ENCODE measurements at regions of chr3 and their contacts with region 1.

Region 1: DNA sequence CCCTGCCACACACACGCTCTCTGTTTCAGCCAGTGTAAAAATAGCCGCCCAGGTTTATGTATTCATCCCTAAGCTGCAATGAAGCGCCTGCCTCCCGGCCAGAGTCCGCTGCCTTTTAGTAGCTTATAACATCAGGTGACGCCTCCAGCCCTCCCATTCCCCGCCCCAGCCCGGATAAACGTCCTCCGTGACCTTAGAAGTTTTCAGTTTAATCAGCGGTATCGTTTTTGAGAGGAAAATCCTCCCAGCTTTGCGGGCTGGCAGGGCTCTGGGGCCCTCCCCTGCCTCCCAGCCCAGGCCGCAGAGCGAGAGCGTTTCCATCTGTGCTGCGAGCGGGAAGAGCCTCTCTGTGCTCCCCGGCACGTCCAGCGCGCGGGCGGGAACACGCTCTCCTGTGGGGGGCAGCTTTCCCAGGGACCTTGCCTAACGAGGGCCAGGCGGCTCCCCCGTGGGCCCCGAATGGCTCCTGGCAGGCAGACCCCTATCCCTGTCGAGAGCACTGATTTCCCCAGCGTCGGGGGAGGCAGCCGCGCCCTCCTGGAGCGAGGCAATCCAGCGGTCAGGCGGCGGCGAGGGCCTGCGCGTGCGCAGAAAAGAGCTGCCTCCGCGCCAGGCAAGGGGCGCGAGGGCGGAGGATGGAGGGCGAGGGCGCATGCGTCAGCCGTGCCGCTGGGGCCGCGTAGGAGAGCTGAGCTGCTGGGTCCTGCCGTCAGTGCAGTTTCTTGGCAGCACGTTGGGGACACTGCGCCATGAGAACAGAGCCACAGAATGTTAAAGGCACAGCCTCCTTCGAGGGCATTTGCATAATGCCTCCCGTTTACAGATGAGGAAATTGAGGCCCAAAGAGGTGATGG is 71.1 kb downstream of the CCNL1 start:
- DNase-seq: peak; percentile 95 to 97
- H3K4me3 ChIP-seq: peak overlapping the region; percentile 58
- H3K4me3 Mint-ChIP-seq: peak overlapping the region; percentile 81
- H3K27ac Mint-ChIP-seq: peak overlapping the region; percentile 89
- H3K4me1 ChIP-seq: peaks cover 26% of the 10 kb centered on the region
- H3K4me1 Mint-ChIP-seq: peaks cover 26% of the 10 kb centered on the region
- H3K27me3 ChIP-seq: no peaks in the 10 kb centered on the region
- H3K27me3 Mint-ChIP-seq: no peaks in the 10 kb centered on the region
- CTCF ChIP-seq: no peak

Region 2: DNA sequence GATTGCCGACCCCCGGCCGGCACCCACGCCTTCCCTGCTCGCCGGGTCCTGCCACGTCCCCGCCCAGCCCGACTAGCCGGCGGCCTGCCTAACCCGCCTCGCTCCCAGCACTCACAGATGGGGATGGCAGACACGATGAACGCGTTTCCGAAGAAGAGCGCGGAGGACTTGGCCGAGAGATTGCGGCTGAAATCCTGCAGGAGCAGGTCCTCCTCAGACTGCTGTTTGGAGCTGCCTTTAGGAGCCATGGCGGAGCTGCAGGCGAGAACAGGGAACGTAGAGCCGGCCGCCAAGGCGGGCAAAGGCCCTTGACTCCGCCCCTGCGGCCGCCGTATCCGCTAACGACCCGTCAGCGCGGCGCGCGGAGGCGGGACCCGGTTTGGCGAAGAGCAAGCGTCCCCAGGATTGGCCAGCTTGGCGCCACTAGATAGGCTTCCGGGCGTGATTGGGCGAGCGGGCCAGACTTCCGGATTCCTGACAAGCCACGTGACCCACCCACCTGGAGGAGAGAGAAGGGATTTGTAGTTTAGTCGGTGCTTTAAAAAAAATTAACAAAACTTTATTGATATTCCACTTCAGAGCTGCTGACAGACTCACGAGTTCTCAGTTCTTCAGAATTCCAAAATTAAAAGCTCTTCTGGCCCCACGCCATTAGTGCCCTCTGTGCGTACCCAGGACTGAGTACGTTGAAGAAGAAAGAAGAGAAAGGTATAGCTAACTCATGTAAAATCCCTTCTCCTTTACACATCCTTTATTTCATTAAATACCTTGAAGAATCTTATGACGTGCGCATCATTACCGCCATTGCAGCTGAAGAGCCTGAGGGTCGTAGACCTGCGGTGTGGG is 533.8 kb before region 1 on chr3 and contains the start of gene SSR3:
- CTCF ChIA-PET with region 1: interaction called, 3 read pairs
- POLR2A ChIA-PET with region 1: interaction called, 10 read pairs
- intact Hi-C with region 1: loop called (anchors 5 kb)
- DNase-seq: peak; percentile 99
- H3K4me3 ChIP-seq: peak within 1 kb of the TSS; percentile 99
- H3K4me3 Mint-ChIP-seq: peak within 1 kb of the TSS; percentile 88
- H3K27ac Mint-ChIP-seq: peak within 1 kb of the TSS; percentile 81
- H3K4me1 ChIP-seq: peaks cover 19% of the 10 kb centered on the region; the same call in 1 of the 2 replicates
- H3K4me1 Mint-ChIP-seq: peaks cover 22% of the 10 kb centered on the region
- H3K27me3 ChIP-seq: no peaks in the 10 kb centered on the region
- H3K27me3 Mint-ChIP-seq: no peaks in the 10 kb centered on the region
- CTCF ChIP-seq: no peak
- total RNA-seq, gene SSR3: 177 and 186 TPM in 2 replicates

Region 3: GRCh38 chr3:156826144-156826895 is 262.5 kb before region 1 on chr3 and contains the start of gene LEKR1:
- CTCF ChIA-PET with region 1: no interaction called
- POLR2A ChIA-PET with region 1: interaction called, 7 read pairs
- intact Hi-C with region 1: loop called (anchors 2 kb)
- DNase-seq: peak; percentile 93 to 94
- H3K4me3 ChIP-seq: peak within 1 kb of the TSS; percentile 52
- H3K4me3 Mint-ChIP-seq: peak within 1 kb of the TSS; percentile 99
- H3K27ac Mint-ChIP-seq: peak within 1 kb of the TSS; percentile 100
- H3K4me1 ChIP-seq: peaks cover 21% of the 10 kb centered on the region
- H3K4me1 Mint-ChIP-seq: peaks cover 18% of the 10 kb centered on the region
- H3K27me3 ChIP-seq: no peaks in the 10 kb centered on the region
- H3K27me3 Mint-ChIP-seq: no peaks in the 10 kb centered on the region
- CTCF ChIP-seq: no peak
- total RNA-seq, gene LEKR1: 1.4 and 1.6 TPM in 2 replicates

Region 4: DNA sequence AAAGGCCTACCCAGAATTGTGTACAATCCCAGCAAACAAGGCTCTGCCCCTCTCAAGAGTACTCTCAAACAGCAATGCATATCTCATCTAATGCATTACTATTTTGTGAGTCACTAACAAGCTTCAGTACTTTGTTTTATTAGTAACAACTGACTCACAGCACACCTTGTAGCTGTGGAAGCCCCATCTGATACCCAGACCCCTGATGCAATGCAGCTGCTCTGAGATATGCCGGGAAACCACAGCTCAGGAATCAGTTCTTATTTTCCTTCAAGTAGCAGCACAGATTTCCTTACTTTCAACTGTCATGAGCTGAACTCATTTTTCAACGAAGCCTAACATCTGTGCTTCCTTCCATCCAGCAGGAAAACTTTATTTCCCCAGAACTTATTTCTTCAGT is 33.3 kb after region 1 on chr3:
- CTCF ChIA-PET with region 1: interaction called, 19 read pairs
- POLR2A ChIA-PET with region 1: interaction called, 75 read pairs
- intact Hi-C with region 1: loop called (anchors 1 kb)
- DNase-seq: no peak
- H3K4me3 ChIP-seq: no peak overlapping the region
- H3K4me3 Mint-ChIP-seq: peak overlapping the region; percentile 87
- H3K27ac Mint-ChIP-seq: peak overlapping the region; percentile 98
- H3K4me1 ChIP-seq: peaks cover 80% of the 10 kb centered on the region
- H3K4me1 Mint-ChIP-seq: peaks cover 55% of the 10 kb centered on the region
- H3K27me3 ChIP-seq: no peaks in the 10 kb centered on the region
- H3K27me3 Mint-ChIP-seq: no peaks in the 10 kb centered on the region
- CTCF ChIP-seq: no peak

Region 5: DNA sequence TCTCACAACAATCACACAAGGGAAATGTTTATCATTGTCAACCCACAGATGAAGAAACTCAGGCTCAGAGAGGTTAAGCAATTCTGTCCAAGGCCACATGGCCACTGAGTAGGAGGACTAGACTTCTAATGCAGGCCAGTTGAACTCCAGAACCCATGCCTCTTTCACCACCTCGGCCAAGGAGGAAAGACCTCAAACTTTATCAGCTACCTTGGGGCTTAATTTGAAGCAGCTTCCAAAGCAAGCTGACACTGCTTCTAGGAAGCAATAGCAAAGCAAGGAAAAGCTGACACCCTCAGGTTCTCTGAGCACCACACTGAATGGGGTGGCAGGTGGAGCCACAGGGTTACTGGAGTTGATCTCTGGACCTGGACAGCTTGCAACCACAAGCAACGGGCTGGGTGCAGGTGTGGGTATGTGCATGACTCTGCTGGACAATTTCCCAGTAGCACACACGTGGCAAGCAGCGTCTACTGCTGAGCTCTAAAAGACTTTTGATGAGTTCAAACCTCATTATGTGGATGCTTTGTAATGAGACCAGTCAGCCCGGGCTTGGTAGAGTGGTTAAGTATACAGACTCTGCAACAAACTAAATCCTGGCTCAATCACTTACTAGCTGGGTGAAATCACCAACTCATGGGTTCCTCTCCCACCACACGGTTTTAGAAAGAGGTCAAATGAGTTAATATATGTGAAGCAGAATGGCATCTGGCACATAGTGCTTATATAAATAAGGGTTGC is 48.0 kb after region 1 on chr3:
- CTCF ChIA-PET with region 1: interaction called, 26 read pairs
- POLR2A ChIA-PET with region 1: interaction called, 21 read pairs
- intact Hi-C with region 1: no loop called
- DNase-seq: no peak
- H3K4me3 ChIP-seq: no peak overlapping the region
- H3K4me3 Mint-ChIP-seq: no peak overlapping the region
- H3K27ac Mint-ChIP-seq: no peak overlapping the region
- H3K4me1 ChIP-seq: peaks cover 27% of the 10 kb centered on the region
- H3K4me1 Mint-ChIP-seq: no peaks in the 10 kb centered on the region
- H3K27me3 ChIP-seq: no peaks in the 10 kb centered on the region
- H3K27me3 Mint-ChIP-seq: no peaks in the 10 kb centered on the region
- CTCF ChIP-seq: no peak